ENCODE measurements at regions of chr3 and their contacts with region 1.

Region 1: GRCh38 chr3:78988324-78988723 is 779.5 kb downstream of the ROBO1 start:
- DNase-seq: peak; percentile 29
- H3K4me3 Mint-ChIP-seq: no peak overlapping the region
- H3K27ac Mint-ChIP-seq: no peak overlapping the region
- H3K4me1 Mint-ChIP-seq: no peaks in the 10 kb centered on the region
- H3K27me3 Mint-ChIP-seq: no peaks in the 10 kb centered on the region
- CTCF ChIP-seq: peak; percentile 49

Region 2: GRCh38 chr3:78659386-78659987 is 328.8 kb before region 1 on chr3:
- CTCF ChIA-PET with region 1: interaction called, 25 read pairs
- POLR2A ChIA-PET with region 1: no interaction called
- intact Hi-C with region 1: loop called (anchors 1 kb)
- DNase-seq: peak; percentile 57
- H3K4me3 Mint-ChIP-seq: no peak overlapping the region
- H3K27ac Mint-ChIP-seq: no peak overlapping the region
- H3K4me1 Mint-ChIP-seq: no peaks in the 10 kb centered on the region
- H3K27me3 Mint-ChIP-seq: no peaks in the 10 kb centered on the region
- CTCF ChIP-seq: peak; percentile 63

Region 3: GRCh38 chr3:78666470-78666800 is 321.9 kb before region 1 on chr3:
- CTCF ChIA-PET with region 1: interaction called, 25 read pairs
- POLR2A ChIA-PET with region 1: interaction called, 4 read pairs
- intact Hi-C with region 1: no loop called
- DNase-seq: peak; percentile 53
- H3K4me3 Mint-ChIP-seq: peak overlapping the region; percentile 38
- H3K27ac Mint-ChIP-seq: peak overlapping the region; percentile 79
- H3K4me1 Mint-ChIP-seq: peaks cover 11% of the 10 kb centered on the region
- H3K27me3 Mint-ChIP-seq: no peaks in the 10 kb centered on the region
- CTCF ChIP-seq: no peak

Region 4: GRCh38 chr3:79032686-79033318 is 44.5 kb after region 1 on chr3:
- CTCF ChIA-PET with region 1: interaction called, 4 read pairs
- POLR2A ChIA-PET with region 1: no interaction called
- intact Hi-C with region 1: loop called (anchors 1 kb)
- DNase-seq: peak; percentile 66
- H3K4me3 Mint-ChIP-seq: no peak overlapping the region
- H3K27ac Mint-ChIP-seq: no peak overlapping the region
- H3K4me1 Mint-ChIP-seq: no peaks in the 10 kb centered on the region
- H3K27me3 Mint-ChIP-seq: no peaks in the 10 kb centered on the region
- CTCF ChIP-seq: peak; percentile 53

Region 5: DNA sequence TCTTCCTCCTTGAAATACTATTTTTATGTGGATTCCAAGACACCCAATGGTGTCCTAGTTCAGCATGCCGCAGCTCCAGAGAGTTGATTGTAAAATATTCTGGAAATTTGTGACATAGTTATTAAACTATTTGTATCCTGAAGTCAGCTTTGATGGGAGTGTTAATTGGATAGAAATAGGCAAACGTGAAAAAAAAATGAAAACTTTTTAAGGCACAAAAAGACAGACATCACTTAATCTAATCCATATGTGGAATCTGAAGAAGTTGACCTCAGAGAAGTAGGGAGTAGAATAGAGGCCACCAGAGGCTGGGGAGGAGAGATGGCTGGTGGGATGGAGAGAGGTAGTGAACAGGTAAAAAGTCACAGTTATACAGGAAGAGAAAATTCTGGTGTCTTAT is 75.3 kb after region 1 on chr3:
- CTCF ChIA-PET with region 1: no interaction called
- POLR2A ChIA-PET with region 1: no interaction called
- intact Hi-C with region 1: no loop called
- DNase-seq: no peak
- H3K4me3 Mint-ChIP-seq: no peak overlapping the region
- H3K27ac Mint-ChIP-seq: no peak overlapping the region
- H3K4me1 Mint-ChIP-seq: no peaks in the 10 kb centered on the region
- H3K27me3 Mint-ChIP-seq: peaks cover 81% of the 10 kb centered on the region
- CTCF ChIP-seq: no peak

Measured in MCF 10A (cell line).